GM12878 (cell line): ENCODE measurements at regions of chr10 and their contacts with region 1.

Region 1: GRCh38 chr10:11578802-11579255 is 32.6 kb downstream of the USP6NL start:
- DNase-seq: peak; percentile 73
- ATAC-seq: peak; percentile 86
- H3K4me3 ChIP-seq: 0 out of 2 replicates have a peak overlapping the region, but pooled peaks have one; percentile 26
- H3K27ac ChIP-seq: peak overlapping the region; percentile 32
- H3K4me1 ChIP-seq: peaks cover 35% of the 10 kb centered on the region
- H3K27me3 ChIP-seq: no peaks in the 10 kb centered on the region
- CTCF ChIP-seq: no peak
- EP300 ChIP-seq: peak in 1 of 2 experiments; percentile 22; a peak in 1 of 4 replicates
- POLR2A ChIP-seq: no peak
- RAD21 ChIP-seq: peak; percentile 26; the same call in 1 of the 2 replicates

Region 2: GRCh38 chr10:11595395-11595692 is 16.5 kb after region 1 on chr10:
- CTCF ChIA-PET with region 1: interaction called, 10 read pairs
- POLR2A ChIA-PET with region 1: no interaction called
- RAD21 ChIA-PET with region 1: interaction called, 7 read pairs
- SMC1A ChIA-PET with region 1: interaction called, 12 read pairs
- in situ Hi-C with region 1: no loop called
- intact Hi-C with region 1: no loop called
- DNase-seq: no peak
- ATAC-seq: peak; percentile 67
- H3K4me3 ChIP-seq: peak overlapping the region; percentile 5; the same call in 1 of the 2 replicates
- H3K27ac ChIP-seq: peak overlapping the region; percentile 34
- H3K4me1 ChIP-seq: peaks cover 18% of the 10 kb centered on the region
- H3K27me3 ChIP-seq: no peaks in the 10 kb centered on the region
- CTCF ChIP-seq: no peak
- EP300 ChIP-seq: no peak
- POLR2A ChIP-seq: no peak
- RAD21 ChIP-seq: no peak

Region 3: GRCh38 chr10:11772575-11773288 is 193.9 kb after region 1 on chr10:
- CTCF ChIA-PET with region 1: no interaction called
- POLR2A ChIA-PET with region 1: no interaction called
- RAD21 ChIA-PET with region 1: no interaction called
- SMC1A ChIA-PET with region 1: no interaction called
- in situ Hi-C with region 1: no loop called
- intact Hi-C with region 1: no loop called
- DNase-seq: no peak
- ATAC-seq: no peak
- H3K4me3 ChIP-seq: no peak overlapping the region
- H3K27ac ChIP-seq: no peak overlapping the region
- H3K4me1 ChIP-seq: no peaks in the 10 kb centered on the region
- H3K27me3 ChIP-seq: no peaks in the 10 kb centered on the region; a peak in 1 of 4 replicates
- CTCF ChIP-seq: no peak
- EP300 ChIP-seq: no peak
- POLR2A ChIP-seq: no peak
- RAD21 ChIP-seq: no peak